Aorta (tissue), 5 donors: ENCODE measurements at regions of chrX and their contacts with region 1.

Region 1: DNA sequence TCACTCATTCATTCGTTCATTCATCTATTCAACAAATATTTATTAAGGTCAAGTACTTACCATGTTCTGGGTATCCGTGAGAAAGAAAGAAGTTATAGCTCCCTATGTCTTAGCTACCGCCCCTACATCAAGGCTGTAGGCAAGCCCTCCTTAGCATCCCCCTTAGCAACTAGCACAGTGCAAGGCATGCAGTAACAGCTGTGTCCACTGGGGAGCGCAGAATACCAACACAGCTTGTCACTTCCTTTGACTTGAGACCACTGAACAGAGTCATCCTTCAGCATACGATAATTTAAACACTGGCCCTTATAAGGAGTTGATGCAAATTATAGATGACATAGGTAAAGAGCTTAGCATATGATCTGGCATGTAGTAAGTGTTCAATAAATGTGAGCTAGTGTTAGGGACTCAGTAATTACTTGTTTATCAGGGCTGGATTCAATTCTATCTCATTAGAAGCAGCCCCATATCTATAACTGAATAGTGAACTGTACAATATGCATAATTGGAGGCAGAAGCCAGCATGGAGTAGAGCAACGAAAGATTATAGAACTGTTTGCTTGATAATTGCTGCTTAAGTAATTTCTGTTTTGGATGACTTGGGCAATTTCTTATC is 8.7 kb downstream of the KIAA1210 start:
- DNase-seq: peak; percentile 59 to 77
- ATAC-seq: no peak
- H3K4me3 ChIP-seq: no peak overlapping the region
- H3K27ac ChIP-seq: no peak overlapping the region
- H3K4me1 ChIP-seq: no peaks in the 10 kb centered on the region
- H3K27me3 ChIP-seq: no peaks in the 10 kb centered on the region

Region 2: GRCh38 chrX:119222932-119223331 is 104.0 kb after region 1 on chrX:
- intact Hi-C with region 1: loop called in 1 of 2 experiments (anchors 2 kb)
- DNase-seq: no peak
- ATAC-seq: no peak
- H3K4me3 ChIP-seq: no peak overlapping the region
- H3K27ac ChIP-seq: no peak overlapping the region
- H3K4me1 ChIP-seq: no peaks in the 10 kb centered on the region
- H3K27me3 ChIP-seq: no peaks in the 10 kb centered on the region

Region 3: DNA sequence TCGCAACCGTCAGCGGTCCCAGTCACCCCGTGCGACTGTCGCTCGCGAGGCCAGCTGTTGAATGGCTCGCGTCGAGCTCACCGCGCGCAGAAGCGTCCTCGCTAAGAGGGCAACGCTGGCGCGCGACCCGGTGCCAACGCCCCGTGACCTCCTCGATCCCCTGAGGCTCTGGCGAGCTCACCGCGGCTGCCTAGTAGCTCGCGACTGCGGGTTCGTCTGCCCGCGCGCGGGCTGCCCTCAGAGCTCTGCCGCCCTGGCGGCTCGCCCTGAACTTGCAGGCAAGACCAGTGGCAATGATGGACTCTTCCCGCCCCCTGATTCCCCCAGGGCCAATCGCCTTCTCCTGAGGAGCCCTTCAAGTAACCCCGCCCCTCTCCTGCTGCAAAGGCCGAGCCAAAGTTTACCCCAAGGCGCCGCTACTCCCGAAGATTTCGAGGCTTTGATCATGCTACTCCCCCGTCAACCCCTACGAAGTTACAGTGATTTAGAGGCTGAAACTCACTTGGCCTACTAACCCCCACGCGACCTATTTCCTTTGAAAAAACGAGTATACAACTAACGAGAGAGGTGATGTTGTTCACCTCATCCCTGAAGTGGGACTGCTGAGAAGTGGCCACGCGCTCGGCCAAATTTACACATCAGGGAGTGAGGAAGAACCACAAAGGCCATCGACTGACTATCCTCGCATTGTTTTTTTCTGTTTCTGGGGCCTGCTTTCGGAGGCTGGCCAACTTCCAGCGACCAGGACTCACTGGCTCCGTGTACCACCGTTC is 154.7 kb after region 1 on chrX:
- intact Hi-C with region 1: loop called in 1 of 2 experiments (anchors 5 kb)
- DNase-seq: peak; percentile 62 to 77
- ATAC-seq: peak; percentile 62
- H3K4me3 ChIP-seq: no peak overlapping the region
- H3K27ac ChIP-seq: no peak overlapping the region
- H3K4me1 ChIP-seq: no peaks in the 10 kb centered on the region
- H3K27me3 ChIP-seq: no peaks in the 10 kb centered on the region